ENCODE measurements at regions of chr10 and their contacts with region 1.

Region 1: DNA sequence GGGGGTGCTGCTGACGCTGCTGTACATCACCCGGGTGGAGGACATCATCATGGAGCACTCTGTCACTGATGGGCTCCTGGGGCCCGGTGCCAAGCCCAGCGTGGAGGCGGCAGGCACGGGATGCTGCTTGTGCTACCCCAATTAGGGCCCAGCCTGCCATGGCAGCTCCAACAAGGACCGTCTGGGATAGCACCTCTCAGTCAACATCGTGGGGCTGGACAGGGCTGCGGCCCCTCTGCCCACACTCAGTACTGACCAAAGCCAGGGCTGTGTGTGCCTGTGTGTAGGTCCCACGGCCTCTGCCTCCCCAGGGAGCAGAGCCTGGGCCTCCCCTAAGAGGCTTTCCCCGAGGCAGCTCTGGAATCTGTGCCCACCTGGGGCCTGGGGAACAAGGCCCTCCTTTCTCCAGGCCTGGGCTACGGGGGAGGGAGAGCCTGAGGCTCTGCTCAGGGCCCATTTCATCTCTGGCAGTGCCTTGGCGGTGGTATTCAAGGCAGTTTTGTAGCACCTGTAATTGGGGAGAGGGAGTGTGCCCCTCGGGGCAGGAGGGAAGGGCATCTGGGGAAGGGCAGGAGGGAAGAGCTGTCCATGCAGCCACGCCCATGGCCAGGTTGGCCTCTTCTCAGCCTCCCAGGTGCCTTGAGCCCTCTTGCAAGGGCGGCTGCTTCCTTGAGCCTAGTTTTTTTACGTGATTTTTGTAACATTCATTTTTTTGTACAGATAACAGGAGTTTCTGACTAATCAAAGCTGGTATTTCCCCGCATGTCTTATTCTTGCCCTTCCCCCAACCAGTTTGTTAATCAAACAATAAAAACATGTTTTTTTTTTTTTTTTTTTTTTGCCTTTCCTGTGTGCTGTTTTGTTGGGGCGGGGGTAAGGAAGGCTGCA is 55.8 kb downstream of the TSPAN15 start:
- DNase-seq: peak; percentile 11
- H3K4me3 ChIP-seq: no peak overlapping the region
- H3K27ac ChIP-seq: no peak overlapping the region
- H3K4me1 ChIP-seq: peaks cover 7% of the 10 kb centered on the region
- H3K27me3 ChIP-seq: no peaks in the 10 kb centered on the region
- CTCF ChIP-seq: no peak
- POLR2A ChIP-seq: no peak

Region 2: GRCh38 chr10:69237528-69238159 is 269.4 kb before region 1 on chr10:
- CTCF ChIA-PET with region 1: interaction called, 6 read pairs
- POLR2A ChIA-PET with region 1: no interaction called
- dilution Hi-C with region 1: no loop called
- intact Hi-C with region 1: loop called (anchors 1 kb)
- DNase-seq: peak; percentile 81
- H3K4me3 ChIP-seq: no peak overlapping the region
- H3K27ac ChIP-seq: no peak overlapping the region
- H3K4me1 ChIP-seq: peaks cover 16% of the 10 kb centered on the region
- H3K27me3 ChIP-seq: no peaks in the 10 kb centered on the region
- CTCF ChIP-seq: peak; percentile 81 to 90
- POLR2A ChIP-seq: no peak

Region 3: GRCh38 chr10:69253171-69253570 is 253.9 kb before region 1 on chr10:
- CTCF ChIA-PET with region 1: no interaction called
- POLR2A ChIA-PET with region 1: no interaction called
- dilution Hi-C with region 1: no loop called
- intact Hi-C with region 1: no loop called
- DNase-seq: no peak
- H3K4me3 ChIP-seq: no peak overlapping the region
- H3K27ac ChIP-seq: no peak overlapping the region
- H3K4me1 ChIP-seq: no peaks in the 10 kb centered on the region
- H3K27me3 ChIP-seq: peaks cover 0 to 2% of the 10 kb centered on the region in 2 experiments
- CTCF ChIP-seq: no peak
- POLR2A ChIP-seq: no peak

Region 4: DNA sequence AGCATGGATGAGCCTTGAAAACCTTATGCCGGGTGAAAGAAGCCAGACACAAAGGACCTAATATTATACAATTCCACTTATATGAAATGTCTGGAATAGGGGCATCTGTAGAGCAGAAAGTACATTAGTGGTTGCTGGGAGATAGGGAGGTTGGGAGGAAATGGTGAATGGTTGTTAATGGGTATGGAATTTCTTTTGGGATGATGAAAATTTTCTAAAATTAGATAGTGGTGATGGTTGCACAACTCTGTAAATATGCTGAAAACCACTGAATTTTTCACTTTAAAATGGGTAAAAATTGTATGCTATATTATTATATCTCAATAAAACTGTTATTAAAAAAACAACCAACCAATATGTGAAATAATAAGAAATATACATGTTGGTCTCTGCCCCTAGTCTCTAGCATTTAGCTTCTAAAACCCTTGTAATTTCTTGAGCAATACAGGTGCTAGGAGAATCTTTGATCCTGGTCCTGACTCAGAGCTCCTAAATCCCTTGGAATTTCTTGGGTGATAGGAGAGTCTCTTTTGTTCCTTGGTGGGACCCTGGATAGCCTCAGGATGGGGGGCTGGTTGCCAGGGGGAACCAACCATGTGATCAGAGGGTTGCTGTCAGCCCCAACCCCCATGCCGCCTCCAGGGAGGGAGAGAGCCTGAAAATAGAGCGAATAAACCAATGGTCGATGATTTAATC is 154.4 kb before region 1 on chr10:
- CTCF ChIA-PET with region 1: no interaction called
- POLR2A ChIA-PET with region 1: no interaction called
- dilution Hi-C with region 1: no loop called
- intact Hi-C with region 1: no loop called
- DNase-seq: no peak
- H3K4me3 ChIP-seq: no peak overlapping the region
- H3K27ac ChIP-seq: no peak overlapping the region
- H3K4me1 ChIP-seq: peaks cover 27% of the 10 kb centered on the region
- H3K27me3 ChIP-seq: no peaks in the 10 kb centered on the region
- CTCF ChIP-seq: no peak
- POLR2A ChIP-seq: no peak

Region 5: DNA sequence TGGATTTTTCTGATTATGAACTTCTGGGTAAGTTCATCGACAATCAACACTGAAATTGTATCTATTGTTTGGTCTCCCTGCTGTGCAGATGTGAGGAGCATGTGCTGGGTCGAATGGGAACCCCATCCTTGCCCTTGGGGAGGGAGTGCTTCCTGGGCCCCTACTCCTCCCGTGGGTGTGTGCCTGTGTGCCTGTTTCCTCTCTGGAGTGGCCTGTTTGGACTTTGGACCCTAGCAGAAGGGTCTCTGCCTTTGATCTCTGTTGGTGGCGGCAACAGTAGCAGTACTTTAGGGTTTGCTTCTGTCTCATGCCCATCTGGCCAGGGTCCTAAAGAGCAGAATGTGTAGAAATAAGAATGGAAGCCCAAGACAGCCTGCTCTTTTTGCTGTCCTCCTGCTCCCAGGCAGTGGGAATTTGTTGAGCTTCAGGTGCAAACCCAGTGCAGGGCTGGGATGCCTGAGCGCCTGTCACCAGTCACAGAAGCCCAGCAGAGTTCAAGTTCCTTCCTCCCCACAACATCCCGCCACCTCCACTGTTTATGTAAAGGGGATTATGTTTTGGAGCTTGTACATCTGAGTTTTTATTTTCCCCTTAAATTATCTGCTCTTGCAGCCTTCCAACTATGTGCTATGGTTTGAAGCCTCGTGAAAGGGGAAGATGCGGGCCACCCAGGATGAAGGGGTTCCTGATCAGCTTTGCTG is 88.9 kb before region 1 on chr10:
- CTCF ChIA-PET with region 1: interaction called, 13 read pairs
- POLR2A ChIA-PET with region 1: no interaction called
- dilution Hi-C with region 1: no loop called
- intact Hi-C with region 1: loop called (anchors 1 kb)
- DNase-seq: no peak
- H3K4me3 ChIP-seq: no peak overlapping the region
- H3K27ac ChIP-seq: no peak overlapping the region
- H3K4me1 ChIP-seq: no peaks in the 10 kb centered on the region
- H3K27me3 ChIP-seq: peaks cover 0 to 1% of the 10 kb centered on the region in 2 experiments
- CTCF ChIP-seq: no peak
- POLR2A ChIP-seq: no peak

Region 6: DNA sequence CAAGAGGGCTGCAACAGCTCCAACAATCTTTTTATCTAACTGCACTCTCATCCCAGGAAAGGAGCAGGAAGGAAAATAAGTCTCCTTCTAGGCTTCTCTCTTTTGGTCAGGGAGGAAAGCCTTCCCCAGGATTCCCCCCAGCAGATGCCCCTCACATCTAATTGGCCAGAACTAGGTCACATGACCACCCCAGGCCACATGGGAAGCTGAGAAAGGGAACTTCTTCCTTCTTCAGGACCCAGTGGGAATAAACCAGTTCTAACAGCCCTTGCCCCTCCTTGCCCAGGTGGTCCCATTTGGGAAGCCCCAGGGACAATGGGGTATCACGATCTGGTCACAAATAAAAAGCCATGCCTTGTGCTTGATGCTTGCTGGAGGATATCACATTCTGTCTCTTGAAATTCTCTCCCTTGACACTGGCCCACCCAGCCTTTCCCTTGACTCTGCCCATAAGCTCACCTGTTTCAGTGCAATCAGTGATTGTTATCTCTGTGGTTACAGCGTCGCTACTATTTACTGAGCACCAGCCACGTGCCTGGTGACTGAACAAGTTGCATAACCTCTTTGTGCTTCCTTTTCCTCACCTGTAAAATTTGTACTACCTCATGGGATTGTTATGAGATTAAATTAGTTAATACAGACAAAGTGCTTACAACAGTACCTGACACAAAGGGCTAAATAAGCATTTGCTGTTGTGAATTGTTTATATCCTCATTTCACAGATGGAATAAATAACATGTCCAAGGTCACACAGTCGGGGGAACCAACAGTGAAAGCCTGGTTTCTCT is 81.4 kb before region 1 on chr10:
- CTCF ChIA-PET with region 1: interaction called, 41 read pairs
- POLR2A ChIA-PET with region 1: no interaction called
- dilution Hi-C with region 1: no loop called
- intact Hi-C with region 1: loop called (anchors 1 kb)
- DNase-seq: no peak
- H3K4me3 ChIP-seq: no peak overlapping the region
- H3K27ac ChIP-seq: no peak overlapping the region
- H3K4me1 ChIP-seq: no peaks in the 10 kb centered on the region
- H3K27me3 ChIP-seq: peaks cover 0 to 1% of the 10 kb centered on the region in 2 experiments
- CTCF ChIP-seq: no peak
- POLR2A ChIP-seq: no peak

Region 7: DNA sequence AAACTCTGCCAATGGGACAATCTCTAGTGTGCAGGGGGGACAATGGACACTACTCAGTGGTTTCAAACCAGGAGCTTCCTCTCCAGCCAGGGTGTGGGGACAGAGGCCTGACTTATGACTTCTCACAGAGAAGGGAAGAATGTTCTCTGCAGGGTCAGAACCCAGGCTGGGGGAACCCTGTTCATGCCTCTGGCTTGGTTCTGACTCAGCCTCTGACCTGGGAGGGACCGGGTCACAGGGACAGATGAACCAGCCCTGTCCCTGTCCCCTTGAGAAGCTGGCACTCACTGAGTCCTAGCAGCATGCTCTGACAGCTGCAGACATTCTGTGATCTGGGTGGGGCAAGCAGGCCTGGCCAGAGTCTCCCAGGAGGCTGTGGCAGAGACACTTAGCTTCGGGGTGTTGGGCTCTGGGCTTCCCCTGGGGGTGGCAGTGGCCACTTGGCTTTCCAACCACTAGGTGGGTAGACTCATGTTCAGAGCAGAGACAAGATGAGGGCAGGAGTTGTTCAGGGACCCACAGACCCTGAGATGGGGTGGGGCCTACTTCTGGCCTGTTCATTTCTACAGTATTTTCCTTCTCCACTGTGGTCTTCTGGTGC is 42.2 kb before region 1 on chr10:
- CTCF ChIA-PET with region 1: interaction called, 9 read pairs
- POLR2A ChIA-PET with region 1: no interaction called
- dilution Hi-C with region 1: no loop called
- intact Hi-C with region 1: loop called (anchors 5 kb)
- DNase-seq: no peak
- H3K4me3 ChIP-seq: no peak overlapping the region
- H3K27ac ChIP-seq: peak overlapping the region; percentile 45
- H3K4me1 ChIP-seq: peaks cover 51% of the 10 kb centered on the region
- H3K27me3 ChIP-seq: no peaks in the 10 kb centered on the region
- CTCF ChIP-seq: no peak
- POLR2A ChIP-seq: no peak

Region 8: GRCh38 chr10:69479240-69480067 is 27.6 kb before region 1 on chr10:
- CTCF ChIA-PET with region 1: interaction called, 8 read pairs
- POLR2A ChIA-PET with region 1: no interaction called
- dilution Hi-C with region 1: no loop called
- intact Hi-C with region 1: loop called (anchors 1 kb)
- DNase-seq: peak; percentile 57
- H3K4me3 ChIP-seq: no peak overlapping the region
- H3K27ac ChIP-seq: peak overlapping the region; percentile 47
- H3K4me1 ChIP-seq: peaks cover 52% of the 10 kb centered on the region
- H3K27me3 ChIP-seq: no peaks in the 10 kb centered on the region
- CTCF ChIP-seq: no peak
- POLR2A ChIP-seq: no peak

Region 9: DNA sequence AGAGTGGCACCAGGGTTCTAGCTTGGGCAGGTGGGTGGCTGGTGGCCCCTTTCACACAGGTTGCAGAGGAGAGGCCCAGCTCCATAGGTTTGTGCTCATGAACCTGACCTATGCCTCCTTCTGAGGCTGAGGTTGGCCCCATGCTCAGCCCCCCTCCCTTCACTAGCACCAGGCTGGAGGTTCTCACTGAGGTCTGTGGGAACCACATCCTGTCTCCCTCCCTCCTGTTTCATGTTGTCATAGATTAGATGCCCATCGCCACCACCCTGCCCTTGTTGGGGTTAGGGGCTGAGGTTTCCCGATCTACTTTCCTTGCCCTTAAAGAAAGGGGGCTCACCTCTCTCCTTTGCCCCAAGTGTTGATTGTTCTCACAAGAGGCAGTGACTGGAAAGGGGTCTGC is 51.5 kb after region 1 on chr10:
- CTCF ChIA-PET with region 1: no interaction called
- POLR2A ChIA-PET with region 1: no interaction called
- dilution Hi-C with region 1: no loop called
- intact Hi-C with region 1: no loop called
- DNase-seq: no peak
- H3K4me3 ChIP-seq: no peak overlapping the region
- H3K27ac ChIP-seq: no peak overlapping the region
- H3K4me1 ChIP-seq: no peaks in the 10 kb centered on the region
- H3K27me3 ChIP-seq: peaks cover 12 to 13% of the 10 kb centered on the region in 2 experiments
- CTCF ChIP-seq: no peak
- POLR2A ChIP-seq: no peak

Region 10: GRCh38 chr10:69573056-69573806 is 66.2 kb after region 1 on chr10 and contains the start of gene NEUROG3:
- CTCF ChIA-PET with region 1: no interaction called
- POLR2A ChIA-PET with region 1: no interaction called
- dilution Hi-C with region 1: no loop called
- intact Hi-C with region 1: no loop called
- DNase-seq: no peak
- H3K4me3 ChIP-seq: no peak within 1 kb of the TSS
- H3K27ac ChIP-seq: no peak within 1 kb of the TSS
- H3K4me1 ChIP-seq: no peaks in the 10 kb centered on the region
- H3K27me3 ChIP-seq: peaks cover 90 to 97% of the 10 kb centered on the region in 2 experiments
- CTCF ChIP-seq: no peak
- POLR2A ChIP-seq: no peak
- total RNA-seq, gene NEUROG3: not detected in 2 replicates

Measured in endothelial cell of umbilical vein (primary cell).